ENCODE measurements at regions of chr15 and their contacts with region 1.

Region 1: DNA sequence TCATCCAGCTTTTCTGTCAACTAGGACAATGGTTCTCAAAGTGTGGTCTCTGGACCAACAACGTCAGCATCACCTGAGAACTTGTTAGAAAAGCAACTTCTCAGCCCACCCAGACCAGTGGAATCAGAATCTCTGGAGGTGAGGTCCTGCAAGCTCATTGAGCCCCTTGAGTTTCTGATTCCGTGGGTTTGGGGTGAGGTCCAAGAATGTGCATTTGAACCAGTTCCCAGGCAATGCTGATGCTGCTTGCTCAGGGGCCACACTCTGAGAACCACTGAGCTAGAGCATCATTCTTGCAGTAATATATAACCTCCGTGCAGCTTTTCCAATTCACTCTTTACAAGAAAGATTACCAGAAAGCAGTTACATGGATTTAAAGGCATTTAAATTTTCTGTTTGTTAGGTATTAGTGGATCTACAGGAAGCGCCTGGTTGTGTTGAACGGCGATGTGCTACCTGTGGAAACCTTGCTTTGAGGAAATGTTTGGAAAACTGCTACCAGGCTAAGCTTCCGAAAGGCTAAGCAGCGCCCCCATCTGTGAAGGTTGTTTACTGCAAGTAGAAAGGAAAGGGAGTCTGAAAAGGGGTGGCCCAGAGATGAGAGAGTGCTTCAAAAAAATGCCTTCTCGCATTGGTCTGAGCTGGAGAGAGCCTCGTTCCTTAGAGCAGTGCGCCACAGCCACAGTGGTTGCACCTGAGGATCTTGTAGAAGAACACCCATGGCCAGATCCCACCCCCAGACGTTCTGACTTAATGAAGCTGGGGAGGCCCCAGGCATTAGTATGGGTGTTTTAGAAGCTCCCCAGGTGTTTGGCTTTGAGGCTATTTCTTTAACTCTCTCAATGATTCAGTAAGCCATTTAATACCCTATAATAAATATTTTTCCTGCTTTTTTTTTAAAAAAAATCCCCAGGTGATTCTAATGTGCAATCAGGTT is 50.0 kb downstream of the RLBP1 start:
- H3K4me3 ChIP-seq: no peak overlapping the region
- H3K27ac ChIP-seq: no peak overlapping the region
- H3K4me1 ChIP-seq: peaks cover 23% of the 10 kb centered on the region
- CTCF ChIP-seq: 0 out of 2 replicates have a peak, but pooled peaks have one; percentile 24

Region 2: DNA sequence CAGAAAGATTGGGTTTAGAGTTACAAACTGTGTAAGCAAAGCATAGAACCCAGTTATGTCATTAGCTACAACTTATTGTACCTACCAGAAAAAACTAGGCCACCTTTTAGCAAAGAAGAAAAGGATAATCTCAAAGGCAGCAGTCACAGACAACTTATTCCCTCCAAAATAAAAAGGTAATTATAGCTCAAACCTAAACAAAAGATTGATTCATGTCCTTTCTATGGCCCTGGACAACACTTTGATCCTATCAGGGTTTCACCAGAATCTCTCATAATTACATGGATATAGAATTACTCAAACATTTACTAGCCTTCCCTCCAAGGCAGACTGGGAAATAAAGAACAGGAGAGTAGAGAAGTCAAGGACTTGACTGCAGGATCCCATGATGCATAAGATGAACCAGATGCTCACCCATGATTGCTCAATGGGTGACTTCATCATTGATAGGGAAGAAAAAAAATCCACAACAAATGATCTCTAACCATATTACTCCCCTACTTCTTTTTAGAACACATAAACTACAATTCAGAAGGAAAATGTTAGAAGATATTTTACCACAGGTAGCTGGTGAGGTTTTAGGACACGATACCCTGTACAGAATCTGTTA is 642.3 kb before region 1 on chr15:
- CTCF ChIA-PET with region 1: no interaction called
- POLR2A ChIA-PET with region 1: no interaction called
- H3K4me3 ChIP-seq: no peak overlapping the region
- H3K27ac ChIP-seq: no peak overlapping the region
- H3K4me1 ChIP-seq: peaks cover 3% of the 10 kb centered on the region; the same call in 1 of the 2 replicates
- CTCF ChIP-seq: no peak

Region 3: DNA sequence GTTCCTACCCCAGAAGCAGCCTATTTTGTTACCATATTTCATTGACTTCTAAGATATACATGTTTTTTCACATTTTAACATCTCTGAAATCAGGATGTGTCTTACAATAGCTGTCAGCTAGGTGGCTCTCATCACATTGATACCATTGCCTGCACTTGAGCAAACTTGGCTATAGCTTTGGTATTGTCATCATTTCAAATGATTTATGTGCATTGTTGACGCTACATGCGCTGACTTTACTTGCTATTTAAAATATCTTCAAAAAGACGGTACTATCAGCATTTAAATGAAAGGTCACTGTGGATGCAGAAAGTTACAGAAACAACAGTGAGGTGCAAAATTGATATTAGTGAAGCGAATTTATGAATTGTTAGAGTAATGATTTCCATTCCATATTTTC is 137.1 kb before region 1 on chr15:
- CTCF ChIA-PET with region 1: interaction called, 12 read pairs
- POLR2A ChIA-PET with region 1: no interaction called
- H3K4me3 ChIP-seq: no peak overlapping the region
- H3K27ac ChIP-seq: no peak overlapping the region
- H3K4me1 ChIP-seq: no peaks in the 10 kb centered on the region
- CTCF ChIP-seq: peak; percentile 43; the same call in 1 of the 2 replicates

Region 4: GRCh38 chr15:89101302-89102191 is 69.9 kb before region 1 on chr15:
- CTCF ChIA-PET with region 1: interaction called, 13 read pairs
- POLR2A ChIA-PET with region 1: no interaction called
- H3K4me3 ChIP-seq: no peak overlapping the region
- H3K27ac ChIP-seq: no peak overlapping the region
- H3K4me1 ChIP-seq: peaks cover 22% of the 10 kb centered on the region
- CTCF ChIP-seq: no peak

Region 5: GRCh38 chr15:89139400-89140166 is 31.8 kb before region 1 on chr15:
- CTCF ChIA-PET with region 1: interaction called, 87 read pairs
- POLR2A ChIA-PET with region 1: no interaction called
- H3K4me3 ChIP-seq: no peak overlapping the region
- H3K27ac ChIP-seq: peak overlapping the region; percentile 53; the same call in 1 of the 2 replicates
- H3K4me1 ChIP-seq: peaks cover 17% of the 10 kb centered on the region
- CTCF ChIP-seq: peak; percentile 64

Region 6: GRCh38 chr15:89187976-89188514 is 16.6 kb after region 1 on chr15:
- CTCF ChIA-PET with region 1: interaction called, 110 read pairs
- POLR2A ChIA-PET with region 1: no interaction called
- H3K4me3 ChIP-seq: no peak overlapping the region
- H3K27ac ChIP-seq: no peak overlapping the region
- H3K4me1 ChIP-seq: no peaks in the 10 kb centered on the region
- CTCF ChIP-seq: no peak

Measured in HEK293 (cell line).